Posterior cingulate gyrus (tissue), 11 donors: ENCODE measurements at regions of chr1 and their contacts with region 1.

Region 1: GRCh38 chr1:26145041-26145959 is 13.6 kb upstream of the FAM110D start:
- DNase-seq: peak; percentile 52 to 96 (median 82)

Region 2: DNA sequence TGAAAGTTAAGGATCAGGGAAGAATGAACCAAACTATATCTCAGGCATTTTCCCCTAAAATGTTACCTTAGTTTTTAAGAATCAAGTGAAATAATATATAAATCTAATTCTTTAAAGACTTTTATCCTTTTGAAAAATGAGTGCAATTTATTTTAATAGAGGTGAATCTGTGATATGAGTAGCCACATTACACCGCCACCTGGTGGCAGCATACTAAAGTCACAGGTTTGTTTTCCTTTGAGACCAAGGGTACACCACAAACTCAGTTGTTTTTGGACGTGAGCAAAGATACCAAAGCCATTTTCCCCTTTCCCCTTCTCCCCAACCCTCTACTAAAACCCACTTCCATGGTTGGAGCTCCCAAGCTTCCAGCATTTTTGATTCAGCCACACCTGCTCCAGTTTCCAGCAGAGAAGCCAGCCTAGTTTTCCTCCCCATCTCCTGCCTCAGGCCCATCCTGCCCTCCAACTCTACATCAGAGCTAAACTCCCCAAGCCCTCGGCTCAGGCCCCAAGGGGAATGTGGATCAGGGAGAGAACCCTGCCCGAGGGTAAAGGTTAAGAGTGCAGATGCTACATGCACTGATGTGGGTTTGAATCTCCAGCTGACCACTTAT is 624.7 kb before region 1 on chr1:
- intact Hi-C with region 1: no loop called
- DNase-seq: peak in 9 of 10 donors; percentile 34 to 92 (median 73)

Region 3: DNA sequence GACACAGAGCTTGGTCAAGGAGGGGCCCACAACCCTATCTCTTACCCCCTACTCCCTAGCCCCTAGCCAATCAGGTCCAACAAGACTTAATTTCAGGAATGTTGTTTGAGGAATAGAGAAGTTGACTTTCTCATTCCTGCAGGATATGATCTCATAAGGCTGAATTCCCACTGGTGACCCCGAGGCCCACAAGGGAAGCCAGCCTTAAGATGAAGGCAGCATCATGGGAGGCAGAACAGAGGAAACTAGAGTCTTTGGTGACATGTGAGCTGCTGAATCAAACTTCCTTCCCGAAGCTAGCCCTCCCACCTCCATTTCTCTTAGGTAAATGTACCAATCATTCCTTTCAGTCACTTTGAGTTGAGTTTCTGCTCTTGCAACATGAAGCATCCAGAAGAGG is 42.8 kb before region 1 on chr1:
- intact Hi-C with region 1: loop called (anchors 1 kb)
- DNase-seq: no peak